Right ventricle myocardium inferior (tissue), 1 donor: ENCODE measurements at regions of chr3 and their contacts with region 1.

Region 1: GRCh38 chr3:195442573-195443390 is at the start of gene ACAP2:
- DNase-seq: peak; percentile 100
- ATAC-seq: peak; percentile 99
- total RNA-seq, gene ACAP2: 15.6 TPM

Region 2: DNA sequence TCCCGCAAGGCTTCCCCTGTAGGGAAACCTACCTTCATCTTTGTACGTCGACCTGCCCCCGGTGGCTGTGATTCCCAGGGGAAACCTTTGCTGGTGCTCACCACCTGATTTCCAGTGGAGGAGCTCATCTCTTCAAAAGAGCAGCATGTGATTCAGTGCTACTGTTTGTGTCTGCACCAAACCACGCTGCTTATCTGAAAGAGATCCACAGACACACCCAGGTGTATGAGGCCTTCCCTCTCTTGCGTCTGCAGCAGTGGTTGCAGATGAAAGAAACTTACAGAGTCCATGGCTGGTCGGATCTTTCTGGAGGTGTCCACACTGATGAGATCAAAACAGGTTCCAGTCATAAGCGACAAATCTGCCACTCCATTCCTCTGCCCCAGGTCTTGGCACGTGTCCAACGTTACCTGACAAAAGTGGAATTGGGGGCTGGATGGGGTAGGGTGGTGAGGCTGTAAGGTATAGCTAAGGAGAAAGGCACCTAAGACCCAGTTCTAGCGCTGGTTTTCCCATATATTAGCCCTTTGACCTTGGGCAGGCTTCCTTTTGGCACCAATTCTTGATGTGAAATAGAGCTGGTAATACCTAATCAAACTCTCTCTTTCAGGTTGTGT is 746.2 kb before region 1 on chr3:
- intact Hi-C with region 1: no loop called
- DNase-seq: no peak
- ATAC-seq: no peak

Region 3: GRCh38 chr3:195271116-195271858 is 171.5 kb before region 1 on chr3 and contains the start of gene XXYLT1:
- intact Hi-C with region 1: loop called (anchors 2 kb)
- DNase-seq: peak; percentile 95
- ATAC-seq: peak; percentile 97
- total RNA-seq, gene XXYLT1: 2.7 TPM

Region 4: GRCh38 chr3:195356151-195357086 is 86.4 kb before region 1 on chr3:
- intact Hi-C with region 1: loop called (anchors 5 kb)
- DNase-seq: peak; percentile 78
- ATAC-seq: peak; percentile 85

Region 5: DNA sequence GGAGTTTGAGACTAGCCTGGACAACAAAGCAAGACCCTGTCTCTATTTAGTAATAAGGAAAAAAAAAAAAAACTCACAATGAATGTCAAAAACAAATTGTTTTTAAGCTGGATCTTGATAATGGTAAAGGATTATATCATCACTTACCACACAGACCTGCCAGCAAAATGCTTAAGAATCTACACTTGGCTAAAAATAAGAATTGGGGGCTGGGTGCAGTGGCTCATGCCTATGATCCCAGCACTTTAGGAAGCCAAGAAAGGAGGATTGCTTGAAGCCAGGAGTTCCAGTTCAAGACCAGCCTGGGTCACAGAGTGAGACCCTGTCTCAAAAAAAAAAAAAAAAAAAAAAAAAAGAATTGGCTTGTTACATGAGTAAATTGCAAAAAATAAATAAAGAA is 30.9 kb before region 1 on chr3:
- intact Hi-C with region 1: no loop called
- DNase-seq: no peak
- ATAC-seq: no peak

Region 6: GRCh38 chr3:195697582-195698301 is 255.0 kb after region 1 on chr3:
- intact Hi-C with region 1: no loop called
- DNase-seq: no peak
- ATAC-seq: peak; percentile 51

Region 7: GRCh38 chr3:195774917-195775316 is 332.1 kb after region 1 on chr3:
- intact Hi-C with region 1: no loop called
- DNase-seq: no peak
- ATAC-seq: peak; percentile 80